ENCODE measurements at regions of chr12 and their contacts with region 1.

Region 1: DNA sequence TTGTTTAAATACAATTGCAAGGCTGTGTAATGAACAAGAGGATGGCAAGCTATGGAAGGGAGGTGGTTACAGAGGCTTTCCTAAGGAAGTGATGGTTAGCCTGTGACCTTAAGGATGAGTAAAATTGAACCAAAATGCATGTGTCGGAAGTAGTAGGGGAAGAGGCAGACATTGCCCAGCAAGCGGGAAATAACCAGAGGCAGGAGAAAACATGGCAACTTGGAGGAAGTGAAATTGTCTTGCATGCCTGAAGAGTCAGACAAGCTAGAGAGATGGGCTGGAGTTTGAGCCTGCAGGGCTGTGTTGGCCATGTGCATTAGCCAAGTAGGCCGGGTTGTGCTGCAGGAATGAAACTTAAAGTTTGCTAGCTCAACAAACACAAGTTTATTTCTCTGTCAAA is 96.2 kb downstream of the BTG1 start:
- DNase-seq: no peak
- H3K4me3 Mint-ChIP-seq: no peak overlapping the region
- H3K27ac Mint-ChIP-seq: no peak overlapping the region
- H3K4me1 Mint-ChIP-seq: peaks cover 53% of the 10 kb centered on the region
- H3K27me3 Mint-ChIP-seq: no peaks in the 10 kb centered on the region

Region 2: GRCh38 chr12:91094032-91094662 is 955.3 kb before region 1 on chr12:
- intact Hi-C with region 1: no loop called
- DNase-seq: no peak
- H3K4me3 Mint-ChIP-seq: no peak overlapping the region
- H3K27ac Mint-ChIP-seq: no peak overlapping the region
- H3K4me1 Mint-ChIP-seq: no peaks in the 10 kb centered on the region
- H3K27me3 Mint-ChIP-seq: peaks cover 2% of the 10 kb centered on the region

Region 3: GRCh38 chr12:91732086-91732485 is 317.3 kb before region 1 on chr12:
- intact Hi-C with region 1: no loop called
- DNase-seq: no peak
- H3K4me3 Mint-ChIP-seq: no peak overlapping the region
- H3K27ac Mint-ChIP-seq: no peak overlapping the region
- H3K4me1 Mint-ChIP-seq: no peaks in the 10 kb centered on the region
- H3K27me3 Mint-ChIP-seq: no peaks in the 10 kb centered on the region

Region 4: DNA sequence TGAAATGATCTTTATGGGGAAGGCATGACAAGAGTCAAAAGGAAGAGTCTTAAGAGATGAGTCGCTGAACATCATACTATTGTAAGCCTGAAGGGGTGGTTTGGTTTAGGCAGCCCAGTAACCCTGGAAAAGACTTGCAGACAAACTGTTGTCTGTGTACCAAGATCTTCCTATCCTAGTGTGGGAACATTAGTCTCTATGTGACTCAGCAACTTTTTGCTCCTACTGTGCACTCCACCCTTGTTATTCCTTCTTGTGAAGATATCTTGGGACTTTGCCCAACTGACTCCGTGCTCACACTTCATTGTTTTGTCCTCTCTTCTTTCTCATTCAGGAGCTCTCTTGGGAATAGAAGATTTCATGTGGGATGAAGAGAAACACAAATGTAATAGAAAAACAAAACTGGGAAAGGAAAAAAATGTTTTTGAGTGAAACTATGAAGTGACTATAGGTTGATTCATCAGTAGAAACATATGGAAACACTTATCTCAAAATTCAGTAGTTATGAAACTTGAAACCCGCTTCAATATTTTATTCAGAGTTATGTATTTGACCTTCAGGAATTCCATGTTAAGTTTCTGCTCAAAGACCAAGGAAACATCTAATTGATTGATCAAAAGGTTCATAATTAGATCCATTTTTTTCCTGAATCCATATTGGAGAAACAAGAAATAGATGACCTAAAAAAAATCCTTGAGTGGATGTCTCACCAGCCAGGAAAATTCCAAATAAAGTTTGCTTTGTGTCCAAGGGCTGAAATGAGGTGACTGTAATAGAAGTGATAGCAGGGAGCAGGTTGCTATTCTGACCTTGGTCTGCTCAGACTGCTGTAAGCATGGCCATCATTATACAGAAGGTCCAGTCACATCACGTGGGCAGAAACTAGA is 29.0 kb after region 1 on chr12:
- intact Hi-C with region 1: loop called (anchors 1 kb)
- DNase-seq: no peak
- H3K4me3 Mint-ChIP-seq: peak overlapping the region; percentile 7
- H3K27ac Mint-ChIP-seq: peak overlapping the region; percentile 82
- H3K4me1 Mint-ChIP-seq: peaks cover 43% of the 10 kb centered on the region
- H3K27me3 Mint-ChIP-seq: no peaks in the 10 kb centered on the region

Region 5: DNA sequence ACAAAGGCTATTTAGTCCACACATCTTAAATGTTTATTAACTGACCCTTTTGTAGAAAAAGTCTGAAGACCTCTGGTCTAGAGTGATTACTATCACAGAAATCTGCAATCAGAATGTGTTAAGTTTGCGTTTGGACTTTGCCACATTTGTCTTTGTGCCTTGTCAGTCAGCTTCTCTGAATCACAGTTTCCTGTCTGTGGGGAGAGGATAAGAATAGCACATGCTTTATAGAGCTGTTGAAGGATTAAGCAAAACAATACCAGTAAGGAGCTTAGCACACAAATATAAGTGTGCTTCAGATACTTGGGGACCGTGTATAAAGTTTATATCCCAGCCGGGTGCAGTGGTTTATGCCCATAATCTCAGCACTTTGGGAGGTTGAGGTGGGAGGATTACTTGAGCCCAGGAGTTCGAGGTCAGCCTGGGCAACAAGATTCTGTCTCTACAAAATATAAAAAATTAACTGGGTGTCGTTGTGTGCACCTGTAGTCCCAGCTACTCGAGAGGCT is 159.3 kb after region 1 on chr12:
- intact Hi-C with region 1: loop called (anchors 10 kb)
- DNase-seq: peak; percentile 82
- H3K4me3 Mint-ChIP-seq: peak overlapping the region; percentile 66
- H3K27ac Mint-ChIP-seq: peak overlapping the region; percentile 94
- H3K4me1 Mint-ChIP-seq: peaks cover 36% of the 10 kb centered on the region
- H3K27me3 Mint-ChIP-seq: no peaks in the 10 kb centered on the region

Measured in activated CD4-positive, alpha-beta T cell treated with anti-CD3 and anti-CD28 coated beads, Interleukin-2, amount 10 ng/mL, durations not matched to agents 24 days and 14 days (primary cell).